IMR-90 (cell line): ENCODE measurements at regions of chr9 and their contacts with region 1.

Region 1: GRCh38 chr9:16103620-16104397 is 551.0 kb downstream of the CCDC171 start:
- DNase-seq: peak; percentile 33
- ATAC-seq: no peak
- H3K4me3 ChIP-seq: no peak overlapping the region
- H3K27ac ChIP-seq: peak overlapping the region; percentile 60; the same call in 1 of the 2 replicates
- H3K4me1 ChIP-seq: peaks cover 29% of the 10 kb centered on the region; the same call in 1 of the 2 replicates
- H3K27me3 ChIP-seq: no peaks in the 10 kb centered on the region
- CTCF ChIP-seq: no peak
- POLR2A ChIP-seq: no peak
- RAD21 ChIP-seq: no peak

Region 2: DNA sequence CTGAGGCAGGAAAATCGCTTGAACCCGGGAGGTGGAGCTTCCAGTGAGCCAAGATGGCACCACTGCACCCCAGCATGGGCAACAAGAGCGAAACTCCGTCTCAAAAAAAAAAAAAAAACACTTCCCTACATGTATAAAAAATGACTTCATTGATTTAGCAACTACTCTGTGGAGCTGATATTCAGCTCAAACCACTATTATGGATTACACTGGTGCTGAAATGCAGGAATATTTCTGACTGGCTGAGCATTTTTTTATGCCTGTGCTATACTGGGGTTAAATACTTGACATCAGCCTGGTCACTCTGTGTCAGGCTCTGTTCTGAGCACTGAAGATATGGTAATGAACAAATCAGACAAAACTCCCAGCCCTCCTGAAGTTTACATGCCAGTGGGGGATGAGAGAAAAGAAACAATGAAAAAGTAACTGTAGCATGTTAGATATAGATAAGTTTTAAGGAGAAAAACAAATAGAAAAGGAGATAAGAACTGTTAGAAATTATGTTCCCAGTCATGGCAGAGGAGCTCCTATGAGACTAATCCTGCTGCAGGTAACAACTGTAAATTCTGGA is 774.2 kb before region 1 on chr9:
- CTCF ChIA-PET with region 1: no interaction called
- POLR2A ChIA-PET with region 1: interaction called, 14 read pairs
- dilution Hi-C with region 1: no loop called
- in situ Hi-C with region 1: no loop called
- intact Hi-C with region 1: no loop called
- DNase-seq: no peak
- ATAC-seq: peak; percentile 27; the same call in 1 of the 2 replicates
- H3K4me3 ChIP-seq: no peak overlapping the region
- H3K27ac ChIP-seq: no peak overlapping the region
- H3K4me1 ChIP-seq: no peaks in the 10 kb centered on the region
- H3K27me3 ChIP-seq: peaks cover 4% of the 10 kb centered on the region; the same call in 1 of the 2 replicates
- CTCF ChIP-seq: no peak
- POLR2A ChIP-seq: no peak
- RAD21 ChIP-seq: no peak